SK-N-SH (cell line): ENCODE measurements at regions of chr20 and their contacts with region 1.

Region 1: DNA sequence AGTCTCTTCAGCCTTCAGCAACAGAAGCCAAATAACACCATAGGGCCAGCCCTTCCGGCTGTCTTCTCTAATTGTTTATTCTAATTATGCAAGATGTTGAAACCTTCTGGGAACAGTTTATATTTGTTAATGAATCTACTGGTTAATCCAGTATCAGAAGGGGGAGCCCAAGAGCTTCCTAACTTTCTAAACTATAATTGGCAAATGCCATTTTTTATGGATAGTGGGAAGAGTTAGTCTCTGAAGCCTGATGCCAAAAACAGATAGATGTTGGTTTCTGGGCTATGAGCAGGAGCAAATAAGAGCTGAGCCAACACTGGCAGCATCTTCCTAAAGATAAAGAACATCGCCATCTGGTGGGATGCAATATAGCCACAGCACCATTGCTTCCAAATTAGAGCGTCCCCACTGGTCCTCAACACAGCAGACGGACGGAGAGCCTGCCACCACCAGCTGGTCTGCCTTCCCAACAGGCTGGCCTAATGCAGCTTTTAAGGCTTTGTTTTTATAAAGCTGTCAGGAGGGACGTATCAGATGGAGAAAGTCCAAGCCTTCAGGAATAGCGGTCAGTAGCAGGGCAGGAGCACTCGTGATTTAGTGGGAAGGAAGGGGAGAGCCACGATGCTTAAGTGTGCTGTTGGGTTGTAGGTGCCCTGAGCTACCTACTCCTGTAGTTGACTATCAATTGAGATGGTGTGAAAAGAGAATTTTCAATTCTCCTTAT is 118.8 kb downstream of the RALGAPA2 start:
- DNase-seq: peak; percentile 49
- H3K4me3 ChIP-seq: peak overlapping the region in 1 of 2 experiments; percentile 27; a peak in 1 of 4 replicates
- H3K27ac ChIP-seq: no peak overlapping the region
- H3K4me1 ChIP-seq: no peaks in the 10 kb centered on the region; a peak in 1 of 4 replicates
- H3K27me3 ChIP-seq: no peaks in the 10 kb centered on the region
- CTCF ChIP-seq: peak; percentile 63
- EP300 ChIP-seq: no peak
- RAD21 ChIP-seq: peak; percentile 55

Region 2: DNA sequence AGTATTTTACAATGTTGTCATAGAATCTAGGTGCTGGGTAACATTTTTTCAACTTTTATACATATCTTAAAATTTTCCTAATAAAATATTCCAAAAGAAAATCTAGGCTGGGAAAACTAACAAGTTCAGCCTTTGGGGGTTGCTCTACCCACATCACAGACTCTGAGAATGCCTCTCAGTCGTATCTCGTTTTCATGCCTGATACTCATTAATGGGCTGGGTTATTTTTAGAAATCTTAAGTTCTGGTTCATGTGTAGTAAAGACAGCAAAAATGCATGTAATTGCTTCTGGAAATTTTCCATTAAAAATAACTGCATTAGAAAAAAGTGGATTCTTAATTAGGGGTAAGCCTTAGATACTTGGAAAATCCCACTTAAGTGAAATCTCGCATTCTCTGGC is 1231.8 kb before region 1 on chr20:
- CTCF ChIA-PET with region 1: no interaction called
- POLR2A ChIA-PET with region 1: no interaction called
- DNase-seq: no peak
- H3K4me3 ChIP-seq: no peak overlapping the region
- H3K27ac ChIP-seq: no peak overlapping the region
- H3K4me1 ChIP-seq: no peaks in the 10 kb centered on the region; a peak in 1 of 4 replicates
- H3K27me3 ChIP-seq: no peaks in the 10 kb centered on the region; the same call in 1 of the 2 replicates
- CTCF ChIP-seq: no peak
- EP300 ChIP-seq: no peak
- RAD21 ChIP-seq: no peak

Region 3: GRCh38 chr20:19802492-19803158 is 791.0 kb before region 1 on chr20:
- CTCF ChIA-PET with region 1: no interaction called
- POLR2A ChIA-PET with region 1: no interaction called
- DNase-seq: no peak
- H3K4me3 ChIP-seq: no peak overlapping the region
- H3K27ac ChIP-seq: no peak overlapping the region
- H3K4me1 ChIP-seq: peaks cover 12 to 13% of the 10 kb centered on the region in 2 experiments; a peak in 3 of 4 replicates
- H3K27me3 ChIP-seq: no peaks in the 10 kb centered on the region
- CTCF ChIP-seq: peak; percentile 21; the same call in 1 of the 2 replicates
- EP300 ChIP-seq: no peak
- RAD21 ChIP-seq: no peak

Region 4: GRCh38 chr20:19903168-19903811 is 690.3 kb before region 1 on chr20:
- CTCF ChIA-PET with region 1: no interaction called
- POLR2A ChIA-PET with region 1: no interaction called
- DNase-seq: no peak
- H3K4me3 ChIP-seq: no peak overlapping the region
- H3K27ac ChIP-seq: no peak overlapping the region
- H3K4me1 ChIP-seq: no peaks in the 10 kb centered on the region
- H3K27me3 ChIP-seq: no peaks in the 10 kb centered on the region
- CTCF ChIP-seq: no peak
- EP300 ChIP-seq: no peak
- RAD21 ChIP-seq: no peak

Region 5: GRCh38 chr20:20083807-20084206 is 509.8 kb before region 1 on chr20:
- CTCF ChIA-PET with region 1: interaction called, 28 read pairs
- POLR2A ChIA-PET with region 1: no interaction called
- DNase-seq: peak; percentile 31
- H3K4me3 ChIP-seq: no peak overlapping the region
- H3K27ac ChIP-seq: no peak overlapping the region
- H3K4me1 ChIP-seq: no peaks in the 10 kb centered on the region; a peak in 2 of 4 replicates
- H3K27me3 ChIP-seq: peaks cover 4% of the 10 kb centered on the region; the same call in 1 of the 2 replicates
- CTCF ChIP-seq: peak; percentile 69
- EP300 ChIP-seq: no peak
- RAD21 ChIP-seq: peak; percentile 84

Region 6: DNA sequence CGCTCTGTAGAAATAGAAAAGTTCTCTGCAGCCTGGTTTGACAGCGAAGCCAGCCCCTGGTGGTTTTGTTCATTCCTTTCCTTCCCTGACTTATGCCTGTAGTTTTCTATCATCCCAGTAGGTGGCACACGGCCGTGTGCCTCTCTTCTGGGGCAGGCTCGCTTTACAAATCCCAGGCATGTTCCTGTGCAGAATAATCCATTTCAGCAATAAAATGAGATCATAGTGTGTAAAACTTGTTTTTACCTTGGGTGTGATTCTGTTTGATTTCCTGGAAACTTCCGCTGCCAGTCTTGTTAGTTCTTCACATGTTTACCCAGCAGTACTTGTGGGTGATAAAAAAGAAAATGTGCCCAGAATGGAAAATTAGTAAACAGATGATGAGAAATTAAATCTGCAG is 233.1 kb before region 1 on chr20:
- CTCF ChIA-PET with region 1: interaction called, 14 read pairs
- POLR2A ChIA-PET with region 1: no interaction called
- DNase-seq: peak; percentile 79
- H3K4me3 ChIP-seq: peak overlapping the region in 1 of 2 experiments; percentile 36; a peak in 1 of 4 replicates
- H3K27ac ChIP-seq: no peak overlapping the region
- H3K4me1 ChIP-seq: no peaks in the 10 kb centered on the region
- H3K27me3 ChIP-seq: peaks cover 44% of the 10 kb centered on the region
- CTCF ChIP-seq: peak; percentile 79
- EP300 ChIP-seq: no peak
- RAD21 ChIP-seq: peak; percentile 81

Region 7: GRCh38 chr20:20582734-20583133 is 10.9 kb before region 1 on chr20:
- CTCF ChIA-PET with region 1: interaction called, 23 read pairs
- POLR2A ChIA-PET with region 1: no interaction called
- DNase-seq: no peak
- H3K4me3 ChIP-seq: no peak overlapping the region
- H3K27ac ChIP-seq: no peak overlapping the region
- H3K4me1 ChIP-seq: no peaks in the 10 kb centered on the region
- H3K27me3 ChIP-seq: no peaks in the 10 kb centered on the region
- CTCF ChIP-seq: no peak
- EP300 ChIP-seq: no peak
- RAD21 ChIP-seq: no peak

Region 8: DNA sequence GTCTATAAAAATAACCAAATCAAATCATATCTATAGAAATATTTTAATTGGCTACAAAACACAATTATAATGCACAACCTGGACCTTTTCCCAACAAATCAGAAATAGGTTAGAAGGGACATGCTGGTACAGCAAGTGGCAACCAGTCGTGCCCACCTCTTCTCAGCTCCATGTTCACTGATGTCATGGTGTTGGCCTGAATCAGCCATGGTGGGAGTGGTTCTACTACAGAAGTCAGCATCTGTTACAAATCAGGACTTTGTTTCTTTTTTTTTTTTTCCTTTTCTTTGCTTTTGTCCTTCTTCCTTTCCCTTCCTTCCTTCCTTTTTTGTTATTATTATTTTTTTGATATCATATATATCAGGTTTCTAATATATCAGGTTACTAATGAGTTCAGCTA is 27.6 kb after region 1 on chr20:
- CTCF ChIA-PET with region 1: interaction called, 14 read pairs
- POLR2A ChIA-PET with region 1: no interaction called
- DNase-seq: no peak
- H3K4me3 ChIP-seq: no peak overlapping the region
- H3K27ac ChIP-seq: no peak overlapping the region
- H3K4me1 ChIP-seq: no peaks in the 10 kb centered on the region
- H3K27me3 ChIP-seq: no peaks in the 10 kb centered on the region
- CTCF ChIP-seq: no peak
- EP300 ChIP-seq: no peak
- RAD21 ChIP-seq: no peak